ENCODE measurements at regions of chr20 and their contacts with region 1.

Region 1: DNA sequence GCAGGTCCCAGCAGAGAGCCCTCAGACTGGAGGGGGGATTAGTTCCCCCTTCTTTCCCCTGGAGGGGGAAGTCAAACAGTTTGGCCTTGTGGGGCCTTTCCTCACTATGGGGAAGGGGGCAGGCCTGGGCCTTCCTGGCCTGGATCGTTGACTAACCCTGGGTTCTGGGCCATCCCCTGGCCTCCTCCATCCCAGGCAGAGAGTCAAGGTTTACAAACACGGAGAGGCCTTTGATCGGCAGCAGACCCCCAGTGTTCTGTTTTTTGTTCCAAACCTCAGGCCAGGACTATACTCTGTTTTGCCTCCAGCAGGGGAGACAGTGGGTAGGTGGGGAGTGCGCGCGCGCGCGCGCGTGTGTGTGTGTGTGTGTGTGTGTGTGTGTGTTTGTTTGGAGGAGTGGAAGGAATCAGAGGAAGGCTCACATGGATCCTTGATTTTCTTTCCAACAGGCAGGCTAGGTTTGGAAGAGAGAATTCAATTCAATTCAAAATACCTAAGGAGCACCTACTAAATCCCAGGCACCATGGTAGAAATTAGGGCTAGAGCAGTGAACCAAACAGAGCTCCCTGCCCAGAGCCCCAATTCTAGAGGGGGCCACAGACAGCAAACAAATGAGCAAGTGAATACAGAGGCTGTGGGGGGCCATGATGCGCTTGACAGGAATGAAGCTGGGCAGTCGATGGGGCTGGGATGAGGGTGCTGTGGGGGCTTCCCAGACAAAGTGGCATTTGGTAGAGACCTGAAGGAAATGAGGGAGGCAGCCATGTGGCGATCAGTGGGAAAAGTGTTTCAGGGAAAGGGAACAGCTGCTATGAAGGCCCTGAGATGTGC is 14.8 kb downstream of the TP53RK start:
- DNase-seq: no peak
- ATAC-seq: no peak
- H3K4me3 ChIP-seq: no peak overlapping the region
- H3K27ac ChIP-seq: peak overlapping the region in 1 of 4 donors; percentile 44
- H3K4me1 ChIP-seq: peaks cover 20% of the 10 kb centered on the region
- H3K27me3 ChIP-seq: no peaks in the 10 kb centered on the region
- CTCF ChIP-seq: no peak
- POLR2A ChIP-seq: no peak

Region 2: DNA sequence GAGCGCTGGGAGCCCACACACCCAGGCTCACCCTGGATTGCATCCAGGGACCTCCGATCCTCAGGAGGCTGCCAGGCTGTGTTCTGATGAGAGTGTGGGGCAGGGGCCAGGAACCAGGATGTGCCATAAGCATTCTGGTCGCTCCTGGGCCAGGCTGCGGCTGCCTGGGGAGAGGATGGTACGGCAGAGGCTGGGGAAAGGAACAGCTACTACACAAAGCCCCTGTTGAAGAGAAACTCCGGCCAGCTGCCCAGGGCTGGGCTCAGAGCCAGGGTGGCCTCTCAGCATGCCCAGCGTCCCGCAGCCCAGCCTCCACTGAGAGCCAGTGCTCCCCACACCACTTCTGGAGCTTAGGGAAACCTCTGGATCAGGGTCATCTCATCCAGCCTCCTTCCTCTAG is 102.3 kb before region 1 on chr20:
- intact Hi-C with region 1: loop called (anchors 10 kb)
- DNase-seq: peak; percentile 26 to 66 (median 43)
- ATAC-seq: peak; percentile 47
- H3K4me3 ChIP-seq: no peak overlapping the region
- H3K27ac ChIP-seq: peak overlapping the region in 3 of 4 donors; percentile 0 to 61 (median 50)
- H3K4me1 ChIP-seq: peaks cover 19% of the 10 kb centered on the region
- H3K27me3 ChIP-seq: no peaks in the 10 kb centered on the region
- CTCF ChIP-seq: no peak
- POLR2A ChIP-seq: no peak

Region 3: GRCh38 chr20:46752728-46753127 is 78.3 kb after region 1 on chr20:
- intact Hi-C with region 1: no loop called
- DNase-seq: peak; percentile 46 to 69 (median 53)
- ATAC-seq: peak; percentile 45
- H3K4me3 ChIP-seq: no peak overlapping the region
- H3K27ac ChIP-seq: no peak overlapping the region
- H3K4me1 ChIP-seq: no peaks in the 10 kb centered on the region
- H3K27me3 ChIP-seq: no peaks in the 10 kb centered on the region
- CTCF ChIP-seq: peak; percentile 40 to 63 (median 60)
- POLR2A ChIP-seq: no peak

Region 4: GRCh38 chr20:47315342-47315662 is 640.8 kb after region 1 on chr20:
- intact Hi-C with region 1: no loop called
- DNase-seq: no peak
- ATAC-seq: no peak
- H3K4me3 ChIP-seq: no peak overlapping the region
- H3K27ac ChIP-seq: peak overlapping the region; percentile 1 to 95 (median 89)
- H3K4me1 ChIP-seq: peaks cover 49% of the 10 kb centered on the region
- H3K27me3 ChIP-seq: no peaks in the 10 kb centered on the region
- CTCF ChIP-seq: no peak
- POLR2A ChIP-seq: no peak